ENCODE measurements at regions of chr3 and their contacts with region 1.

Region 1: DNA sequence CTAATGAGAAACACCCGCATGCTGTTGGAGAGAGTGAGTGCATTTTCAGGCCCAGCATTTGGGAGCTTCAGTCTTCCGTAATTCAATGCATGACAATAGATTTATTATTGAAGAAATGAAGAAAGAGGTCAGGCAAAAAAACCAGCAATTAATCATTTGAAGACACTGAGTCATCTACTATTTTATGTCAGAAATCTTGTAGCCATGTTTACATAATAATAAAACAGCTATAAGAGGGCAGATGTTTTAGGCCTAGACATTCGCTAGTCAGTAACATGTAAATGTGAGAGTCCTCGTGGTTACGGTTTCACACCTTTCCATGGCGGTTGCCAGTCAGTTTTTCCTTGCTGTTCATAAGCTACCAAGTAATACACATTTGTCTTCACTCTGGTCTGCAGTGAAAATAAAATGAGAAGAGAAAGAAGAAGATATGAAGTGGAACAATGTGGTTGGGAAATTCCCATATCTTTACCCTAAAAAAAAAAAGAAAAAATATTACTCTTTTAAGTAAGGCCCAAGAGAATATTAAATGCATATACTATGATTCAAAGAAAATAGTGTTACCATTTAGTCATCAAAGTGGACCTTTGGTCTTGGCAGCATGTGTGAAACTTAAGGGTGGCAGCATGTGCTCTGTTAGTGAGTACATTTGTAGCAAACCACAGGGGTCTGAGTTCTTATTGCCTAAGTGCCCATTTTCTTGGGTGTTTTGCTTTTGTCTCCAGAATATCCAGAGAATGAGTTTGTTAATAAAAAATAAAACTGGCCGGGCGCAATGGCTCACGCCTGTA is 140.5 kb upstream of the TBL1XR1 start:
- DNase-seq: no peak
- ATAC-seq: no peak
- H3K4me3 ChIP-seq: no peak overlapping the region
- H3K27ac ChIP-seq: peak overlapping the region; percentile 88
- H3K4me1 ChIP-seq: peaks cover 18 to 65% of the 10 kb centered on the region in 2 experiments
- H3K27me3 ChIP-seq: no peaks in the 10 kb centered on the region
- CTCF ChIP-seq: no peak
- EP300 ChIP-seq: no peak
- POLR2A ChIP-seq: no peak
- RAD21 ChIP-seq: no peak

Region 2: GRCh38 chr3:177300039-177300833 is 37.5 kb before region 1 on chr3:
- CTCF ChIA-PET with region 1: no interaction called
- POLR2A ChIA-PET with region 1: no interaction called
- in situ Hi-C with region 1: no loop called
- intact Hi-C with region 1: loop called (anchors 5 kb)
- DNase-seq: peak in 3 of 4 experiments; percentile 23 to 77 (median 65)
- ATAC-seq: peak; percentile 85
- H3K4me3 ChIP-seq: no peak overlapping the region
- H3K27ac ChIP-seq: peak overlapping the region; percentile 58
- H3K4me1 ChIP-seq: peaks cover 4 to 10% of the 10 kb centered on the region in 2 experiments; a peak in 3 of 5 replicates
- H3K27me3 ChIP-seq: no peaks in the 10 kb centered on the region
- CTCF ChIP-seq: no peak
- EP300 ChIP-seq: peak; percentile 56; the same call in 1 of the 2 replicates
- POLR2A ChIP-seq: no peak
- RAD21 ChIP-seq: peak in 1 of 2 experiments; percentile 14; a peak in 1 of 4 replicates

Region 3: DNA sequence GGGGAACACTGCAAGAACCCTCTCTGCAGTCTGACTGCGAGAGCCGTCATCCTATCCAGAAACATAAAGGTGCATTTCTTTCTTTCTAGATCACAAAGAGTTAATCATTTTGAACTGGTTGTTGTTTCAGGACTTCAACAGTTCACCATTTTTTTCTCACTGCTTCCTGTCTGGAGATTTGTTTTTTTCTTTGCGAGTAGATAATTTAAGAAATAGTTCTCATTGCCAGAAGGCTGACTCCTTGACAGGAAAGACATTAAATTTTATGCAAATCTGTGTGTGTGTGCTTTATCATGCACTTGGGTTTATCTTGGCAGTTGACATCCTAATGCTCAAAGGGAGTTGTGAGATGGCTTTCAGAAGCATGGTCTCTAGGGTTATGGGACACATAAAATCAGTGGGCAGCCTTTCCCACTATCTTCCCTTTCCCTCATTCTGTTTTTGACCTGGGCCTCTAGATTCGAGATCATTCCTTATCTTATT is 16.9 kb before region 1 on chr3:
- CTCF ChIA-PET with region 1: no interaction called
- POLR2A ChIA-PET with region 1: no interaction called
- in situ Hi-C with region 1: no loop called
- intact Hi-C with region 1: no loop called
- DNase-seq: no peak
- ATAC-seq: peak; percentile 57
- H3K4me3 ChIP-seq: no peak overlapping the region
- H3K27ac ChIP-seq: no peak overlapping the region; the same call in 2 of the 3 replicates
- H3K4me1 ChIP-seq: peaks cover 0 to 5% of the 10 kb centered on the region in 2 experiments; a peak in 3 of 5 replicates
- H3K27me3 ChIP-seq: no peaks in the 10 kb centered on the region
- CTCF ChIP-seq: no peak
- EP300 ChIP-seq: no peak
- POLR2A ChIP-seq: no peak
- RAD21 ChIP-seq: no peak

Region 4: GRCh38 chr3:177410730-177411129 is 73.0 kb after region 1 on chr3:
- CTCF ChIA-PET with region 1: no interaction called
- POLR2A ChIA-PET with region 1: no interaction called
- in situ Hi-C with region 1: no loop called
- intact Hi-C with region 1: no loop called
- DNase-seq: no peak
- ATAC-seq: no peak
- H3K4me3 ChIP-seq: no peak overlapping the region
- H3K27ac ChIP-seq: no peak overlapping the region
- H3K4me1 ChIP-seq: no peaks in the 10 kb centered on the region
- H3K27me3 ChIP-seq: no peaks in the 10 kb centered on the region
- CTCF ChIP-seq: no peak
- EP300 ChIP-seq: no peak
- POLR2A ChIP-seq: no peak
- RAD21 ChIP-seq: no peak

Measured in K562 (cell line).